GM10248 (cell line): ENCODE measurements at regions of chr7 and their contacts with region 1.

Region 1: DNA sequence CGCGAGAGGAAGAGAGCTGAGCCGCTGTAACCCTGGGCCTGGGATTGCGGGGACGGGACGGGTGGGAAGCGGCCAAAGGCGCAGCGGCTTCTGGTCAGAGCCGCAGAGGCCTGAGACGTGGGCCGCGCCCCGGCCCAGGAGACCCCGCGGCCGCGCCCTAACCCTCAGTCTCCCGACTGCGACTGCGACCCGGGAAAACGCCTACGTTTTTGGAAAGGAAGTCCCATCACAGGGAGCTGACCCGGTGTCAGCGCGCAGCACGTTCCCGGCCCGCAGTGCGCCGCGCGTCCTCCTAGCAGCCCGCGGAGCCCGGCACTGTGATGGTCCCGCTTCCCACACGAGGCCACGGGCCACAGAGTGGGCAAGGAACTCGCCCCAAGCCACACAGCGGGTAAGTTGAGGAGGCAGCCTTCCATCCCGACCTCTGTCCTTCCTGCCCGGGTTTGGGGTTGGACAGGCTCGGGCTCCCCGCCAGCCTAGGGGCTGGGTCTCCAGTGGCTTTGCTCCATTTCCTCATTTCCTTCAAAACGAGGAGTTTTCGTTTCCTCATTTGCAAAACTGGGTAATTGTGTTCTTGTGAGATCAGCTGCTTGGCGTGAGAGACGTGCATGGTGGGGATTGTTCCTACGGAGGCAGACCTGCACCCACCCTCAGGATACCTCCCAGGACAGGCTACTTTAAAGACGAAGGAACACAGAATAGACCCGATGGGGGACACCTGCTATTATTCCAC is 1.2 kb downstream of the GPNMB start:
- DNase-seq: peak; percentile 55
- CTCF ChIP-seq: no peak

Region 2: GRCh38 chr7:23261843-23262452 is 14.2 kb after region 1 on chr7:
- CTCF ChIA-PET with region 1: interaction called, 11 read pairs
- POLR2A ChIA-PET with region 1: no interaction called
- DNase-seq: peak; percentile 82
- CTCF ChIP-seq: peak; percentile 88

Region 3: GRCh38 chr7:23445326-23445725 is 197.6 kb after region 1 on chr7:
- CTCF ChIA-PET with region 1: no interaction called
- POLR2A ChIA-PET with region 1: no interaction called
- DNase-seq: no peak
- CTCF ChIP-seq: no peak